ENCODE measurements at regions of chr16 and their contacts with region 1.

Region 1: GRCh38 chr16:30740364-30741251 is 7.6 kb upstream of the PHKG2 start:
- DNase-seq: peak; percentile 95

Region 2: GRCh38 chr16:30567991-30568638 is 172.5 kb before region 1 on chr16:
- intact Hi-C with region 1: no loop called
- DNase-seq: no peak

Region 3: GRCh38 chr16:30700491-30700890 is 40.1 kb before region 1 on chr16:
- intact Hi-C with region 1: loop called in 1 of 2 experiments (anchors 2 kb)
- DNase-seq: no peak